CD8-positive, alpha-beta T cell (primary cell): ENCODE measurements at regions of chr11 and their contacts with region 1.

Region 1: GRCh38 chr11:57712256-57713150 is at the start of gene TMX2:
- DNase-seq: peak; percentile 78 to 97 (median 88)
- ATAC-seq: peak; percentile 87
- H3K4me3 ChIP-seq: peak within 1 kb of the TSS; percentile 98 to 100
- H3K4me3 Mint-ChIP-seq: peak within 1 kb of the TSS; percentile 98
- H3K27ac ChIP-seq: peak within 1 kb of the TSS; percentile 91 to 93
- H3K27ac Mint-ChIP-seq: peak within 1 kb of the TSS; percentile 97
- H3K4me1 ChIP-seq: peaks cover 33% of the 10 kb centered on the region
- H3K4me1 Mint-ChIP-seq: peaks cover 52% of the 10 kb centered on the region
- H3K27me3 ChIP-seq: no peaks in the 10 kb centered on the region
- H3K27me3 Mint-ChIP-seq: no peaks in the 10 kb centered on the region
- CTCF ChIP-seq: no peak
- total RNA-seq, gene TMX2: 38.5 to 42.1 TPM

Region 2: GRCh38 chr11:57426929-57427726 is 285.4 kb before region 1 on chr11 and contains the start of gene SLC43A3:
- CTCF ChIA-PET with region 1: no interaction called
- POLR2A ChIA-PET with region 1: no interaction called
- intact Hi-C with region 1: loop called in 1 of 2 experiments (anchors 2 kb)
- DNase-seq: peak in 8 of 9 experiments; percentile 46 to 80 (median 64)
- ATAC-seq: peak; percentile 32
- H3K4me3 ChIP-seq: peak within 1 kb of the TSS; percentile 47 to 63
- H3K4me3 Mint-ChIP-seq: peak within 1 kb of the TSS; percentile 86
- H3K27ac ChIP-seq: peak within 1 kb of the TSS in 1 of 2 experiments; percentile 85
- H3K27ac Mint-ChIP-seq: peak within 1 kb of the TSS; percentile 89
- H3K4me1 ChIP-seq: peaks cover 31% of the 10 kb centered on the region
- H3K4me1 Mint-ChIP-seq: peaks cover 46% of the 10 kb centered on the region
- H3K27me3 ChIP-seq: no peaks in the 10 kb centered on the region
- H3K27me3 Mint-ChIP-seq: no peaks in the 10 kb centered on the region
- CTCF ChIP-seq: no peak
- total RNA-seq, gene SLC43A3: 9.3 to 11.3 TPM

Region 3: DNA sequence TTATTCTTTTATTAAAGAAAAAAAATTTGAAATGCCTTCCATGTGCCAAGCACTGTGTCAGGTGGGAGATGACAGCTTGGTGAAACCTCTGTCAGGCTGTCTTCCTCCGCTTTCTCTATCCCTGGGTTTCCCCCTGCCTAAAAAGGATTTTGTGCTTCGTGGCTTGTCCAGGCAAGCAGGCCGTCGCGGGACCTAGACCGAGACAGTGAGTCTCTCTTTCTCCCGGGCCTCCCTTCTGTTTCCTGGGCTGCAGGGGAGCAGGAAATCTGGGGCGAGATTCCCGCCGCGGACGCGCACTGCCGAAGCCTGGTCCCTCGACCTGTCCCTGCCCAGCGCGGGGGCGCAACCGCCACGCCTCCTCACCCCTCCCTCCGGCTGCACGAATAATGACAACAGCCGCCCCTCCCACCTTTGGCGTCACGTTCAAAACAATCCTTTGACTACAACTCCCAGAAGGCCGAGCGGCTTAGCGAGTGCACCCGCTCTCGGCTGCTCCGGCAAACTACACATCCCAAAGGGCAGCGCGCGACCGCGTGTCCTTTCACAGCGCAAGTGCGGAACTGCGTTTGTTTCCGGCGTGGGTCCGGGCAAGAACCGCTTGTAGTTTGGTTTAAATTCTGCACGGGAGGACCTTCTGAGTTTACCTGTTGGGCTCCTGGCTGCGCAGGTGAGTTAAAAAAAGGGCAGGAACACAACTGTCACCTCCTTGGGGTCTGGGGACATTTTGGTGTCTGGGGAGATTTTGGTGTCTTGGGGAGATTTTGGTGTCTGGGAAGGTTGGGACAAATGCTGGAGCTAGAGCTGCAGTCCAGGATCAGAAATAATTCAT is 55.1 kb before region 1 on chr11 and contains the start of gene CLP1:
- CTCF ChIA-PET with region 1: no interaction called
- POLR2A ChIA-PET with region 1: no interaction called
- intact Hi-C with region 1: loop called (anchors 1 to 2 kb)
- DNase-seq: peak; percentile 97 to 100 (median 99)
- ATAC-seq: peak; percentile 94
- H3K4me3 ChIP-seq: peak within 1 kb of the TSS; percentile 59 to 74
- H3K4me3 Mint-ChIP-seq: peak within 1 kb of the TSS; percentile 94
- H3K27ac ChIP-seq: peak within 1 kb of the TSS; percentile 83
- H3K27ac Mint-ChIP-seq: peak within 1 kb of the TSS; percentile 90
- H3K4me1 ChIP-seq: peaks cover 11% of the 10 kb centered on the region
- H3K4me1 Mint-ChIP-seq: peaks cover 43% of the 10 kb centered on the region
- H3K27me3 ChIP-seq: no peaks in the 10 kb centered on the region
- H3K27me3 Mint-ChIP-seq: no peaks in the 10 kb centered on the region
- CTCF ChIP-seq: no peak
- total RNA-seq, gene CLP1: 22.7 to 27.1 TPM

Region 4: GRCh38 chr11:57741132-57742086 is 28.9 kb after region 1 on chr11 and contains the start of gene SELENOH:
- CTCF ChIA-PET with region 1: no interaction called
- POLR2A ChIA-PET with region 1: interaction called, 16 read pairs
- intact Hi-C with region 1: loop called (anchors 1 kb)
- DNase-seq: peak; percentile 83 to 97 (median 91)
- ATAC-seq: peak; percentile 85
- H3K4me3 ChIP-seq: peak within 1 kb of the TSS; percentile 90 to 97
- H3K4me3 Mint-ChIP-seq: peak within 1 kb of the TSS; percentile 92
- H3K27ac ChIP-seq: peak within 1 kb of the TSS; percentile 97
- H3K27ac Mint-ChIP-seq: peak within 1 kb of the TSS; percentile 98
- H3K4me1 ChIP-seq: peaks cover 34% of the 10 kb centered on the region
- H3K4me1 Mint-ChIP-seq: peaks cover 41% of the 10 kb centered on the region
- H3K27me3 ChIP-seq: no peaks in the 10 kb centered on the region
- H3K27me3 Mint-ChIP-seq: no peaks in the 10 kb centered on the region
- CTCF ChIP-seq: no peak
- total RNA-seq, gene SELENOH: 40.8 to 44.1 TPM

Region 5: DNA sequence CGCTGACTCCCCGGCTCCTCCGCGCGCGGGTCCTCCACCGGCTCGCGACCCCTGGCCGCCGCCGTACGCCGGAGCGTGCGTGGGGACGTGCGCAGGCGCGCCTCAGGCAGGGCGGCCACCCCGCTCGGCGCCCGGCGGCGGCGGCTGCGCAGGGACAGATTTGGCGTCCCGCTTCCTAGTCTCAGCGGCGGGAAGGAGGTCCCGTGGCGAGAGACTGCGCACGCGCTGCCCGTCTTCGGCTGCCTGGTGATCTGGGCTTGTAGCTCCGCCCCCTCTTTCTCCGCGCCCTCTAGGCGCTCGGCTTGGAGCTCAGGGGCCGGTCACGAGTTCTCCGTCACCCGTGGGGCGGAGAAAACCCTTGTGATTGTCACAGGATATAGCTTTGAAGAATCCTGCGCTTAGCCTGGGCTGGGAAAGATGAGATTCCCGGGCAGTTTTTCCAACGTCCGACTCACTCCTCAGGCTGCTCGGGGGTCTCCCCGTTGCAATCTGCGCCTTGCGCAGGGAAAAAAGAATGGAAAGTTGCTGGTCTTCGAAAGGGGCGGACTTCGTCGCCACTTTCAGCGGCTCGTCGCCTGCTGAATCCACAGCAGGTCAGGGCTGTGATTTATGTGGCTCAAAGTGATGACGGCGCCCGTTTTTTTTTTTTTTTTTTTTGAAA is 1956.6 kb after region 1 on chr11 and contains the start of gene PATL1:
- CTCF ChIA-PET with region 1: no interaction called
- POLR2A ChIA-PET with region 1: no interaction called
- intact Hi-C with region 1: loop called in 1 of 2 experiments (anchors 2 kb)
- DNase-seq: peak; percentile 98 to 100 (median 99)
- ATAC-seq: peak; percentile 88
- H3K4me3 ChIP-seq: peak within 1 kb of the TSS; percentile 79 to 98
- H3K4me3 Mint-ChIP-seq: peak within 1 kb of the TSS; percentile 98
- H3K27ac ChIP-seq: peak within 1 kb of the TSS; percentile 98 to 99
- H3K27ac Mint-ChIP-seq: peak within 1 kb of the TSS; percentile 100
- H3K4me1 ChIP-seq: peaks cover 22% of the 10 kb centered on the region
- H3K4me1 Mint-ChIP-seq: peaks cover 43% of the 10 kb centered on the region
- H3K27me3 ChIP-seq: no peaks in the 10 kb centered on the region
- H3K27me3 Mint-ChIP-seq: no peaks in the 10 kb centered on the region
- CTCF ChIP-seq: no peak
- total RNA-seq, gene PATL1: 59.5 to 59.6 TPM